Activated CD8-positive, alpha-beta T cell treated with anti-CD3 and anti-CD28 coated beads, Interleukin-2, amount 10 ng/mL, durations not matched to agents 7 days and 5 days (primary cell): ENCODE measurements at regions of chr12 and their contacts with region 1.

Region 1: GRCh38 chr12:99053616-99054362 is 408.7 kb downstream of the APAF1 start:
- DNase-seq: no peak
- ATAC-seq: no peak
- H3K4me3 Mint-ChIP-seq: no peak overlapping the region
- H3K27ac Mint-ChIP-seq: no peak overlapping the region
- H3K4me1 Mint-ChIP-seq: no peaks in the 10 kb centered on the region
- H3K27me3 Mint-ChIP-seq: no peaks in the 10 kb centered on the region

Region 2: GRCh38 chr12:99043319-99043914 is 10.4 kb before region 1 on chr12:
- CTCF ChIA-PET with region 1: interaction called, 12 read pairs
- POLR2A ChIA-PET with region 1: interaction called, 3 read pairs
- DNase-seq: peak; percentile 55
- ATAC-seq: no peak
- H3K4me3 Mint-ChIP-seq: no peak overlapping the region
- H3K27ac Mint-ChIP-seq: no peak overlapping the region
- H3K4me1 Mint-ChIP-seq: no peaks in the 10 kb centered on the region
- H3K27me3 Mint-ChIP-seq: no peaks in the 10 kb centered on the region